PC-3 (cell line): ENCODE measurements at regions of chr13 and their contacts with region 1.

Region 1: DNA sequence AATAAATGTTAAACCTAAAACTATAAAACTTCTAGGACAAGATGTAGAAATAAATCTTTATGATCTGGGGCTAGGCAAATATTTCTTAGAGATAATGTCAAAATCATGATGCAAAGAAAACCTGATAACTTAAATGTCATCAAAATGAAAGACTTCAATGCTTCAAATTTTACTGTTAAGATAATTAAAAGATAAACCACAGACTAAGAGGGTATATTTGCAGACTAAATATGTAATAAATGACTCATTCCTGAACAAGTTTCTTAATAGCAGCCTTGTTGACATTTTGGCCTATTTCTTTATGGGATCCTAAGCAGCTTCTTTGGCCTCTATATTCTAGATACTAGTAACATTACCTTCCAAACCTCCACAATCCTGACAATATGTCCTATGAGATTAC is 2878.3 kb upstream of the PCDH20 start:
- DNase-seq: peak; percentile 62
- ATAC-seq: peak; percentile 91
- H3K4me3 ChIP-seq: no peak overlapping the region
- H3K27ac ChIP-seq: peak overlapping the region; percentile 59
- H3K4me1 ChIP-seq: peaks cover 18% of the 10 kb centered on the region
- H3K27me3 ChIP-seq: no peaks in the 10 kb centered on the region
- CTCF ChIP-seq: no peak

Region 2: GRCh38 chr13:63972328-63972727 is 321.6 kb before region 1 on chr13:
- CTCF ChIA-PET with region 1: no interaction called
- POLR2A ChIA-PET with region 1: no interaction called
- intact Hi-C with region 1: loop called (anchors 10 kb)
- DNase-seq: peak; percentile 15
- ATAC-seq: peak; percentile 87
- H3K4me3 ChIP-seq: no peak overlapping the region
- H3K27ac ChIP-seq: no peak overlapping the region
- H3K4me1 ChIP-seq: no peaks in the 10 kb centered on the region
- H3K27me3 ChIP-seq: no peaks in the 10 kb centered on the region
- CTCF ChIP-seq: no peak

Region 3: GRCh38 chr13:64314331-64314730 is 20.4 kb after region 1 on chr13:
- CTCF ChIA-PET with region 1: no interaction called
- POLR2A ChIA-PET with region 1: no interaction called
- intact Hi-C with region 1: no loop called
- DNase-seq: peak; percentile 74
- ATAC-seq: peak; percentile 77
- H3K4me3 ChIP-seq: no peak overlapping the region
- H3K27ac ChIP-seq: peak overlapping the region; percentile 75
- H3K4me1 ChIP-seq: peaks cover 29% of the 10 kb centered on the region
- H3K27me3 ChIP-seq: no peaks in the 10 kb centered on the region
- CTCF ChIP-seq: no peak

Region 4: GRCh38 chr13:64339373-64340063 is 45.6 kb after region 1 on chr13:
- CTCF ChIA-PET with region 1: no interaction called
- POLR2A ChIA-PET with region 1: no interaction called
- intact Hi-C with region 1: no loop called
- DNase-seq: no peak
- ATAC-seq: no peak
- H3K4me3 ChIP-seq: no peak overlapping the region
- H3K27ac ChIP-seq: no peak overlapping the region
- H3K4me1 ChIP-seq: no peaks in the 10 kb centered on the region
- H3K27me3 ChIP-seq: no peaks in the 10 kb centered on the region
- CTCF ChIP-seq: no peak